Activated naive CD4-positive, alpha-beta T cell treated with anti-CD3 and anti-CD28 coated beads for 36 hours (primary cell): ENCODE measurements at regions of chr16 and their contacts with region 1.

Region 1: DNA sequence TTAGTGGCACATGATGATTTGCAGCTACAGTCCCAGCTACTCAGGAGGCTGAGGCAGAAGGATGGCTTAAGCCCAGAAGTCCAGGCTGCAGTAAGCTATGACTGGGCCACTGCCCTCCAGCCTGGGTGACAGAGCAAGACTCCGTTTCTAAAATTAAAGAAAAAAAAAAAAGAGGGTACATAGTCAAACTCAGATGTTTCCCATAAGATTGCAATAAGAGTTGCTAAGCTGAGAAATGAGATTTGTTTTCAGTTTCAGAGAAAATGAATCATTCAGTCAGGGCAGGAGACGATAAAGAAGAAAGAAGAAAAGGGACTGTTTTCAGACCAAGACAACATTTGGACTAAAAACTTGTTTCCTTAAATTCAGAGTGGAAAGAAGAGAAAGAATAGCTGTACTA is 30.2 kb upstream of the PHLPP2 start:
- DNase-seq: peak; percentile 10
- H3K4me3 Mint-ChIP-seq: no peak overlapping the region
- H3K27ac Mint-ChIP-seq: peak overlapping the region; percentile 81
- H3K4me1 Mint-ChIP-seq: peaks cover 23% of the 10 kb centered on the region
- H3K27me3 Mint-ChIP-seq: no peaks in the 10 kb centered on the region

Region 2: GRCh38 chr16:71775949-71776348 is 21.3 kb after region 1 on chr16:
- CTCF ChIA-PET with region 1: interaction called, 3 read pairs
- intact Hi-C with region 1: loop called (anchors 1 kb)
- DNase-seq: no peak
- H3K4me3 Mint-ChIP-seq: no peak overlapping the region
- H3K27ac Mint-ChIP-seq: peak overlapping the region; percentile 67
- H3K4me1 Mint-ChIP-seq: peaks cover 31% of the 10 kb centered on the region
- H3K27me3 Mint-ChIP-seq: no peaks in the 10 kb centered on the region

Region 3: GRCh38 chr16:71845639-71846430 is 91.2 kb after region 1 on chr16 and contains the start of gene ATXN1L:
- CTCF ChIA-PET with region 1: interaction called, 4 read pairs
- intact Hi-C with region 1: loop called (anchors 1 kb)
- DNase-seq: peak; percentile 90
- H3K4me3 Mint-ChIP-seq: peak within 1 kb of the TSS; percentile 88
- H3K27ac Mint-ChIP-seq: peak within 1 kb of the TSS; percentile 93
- H3K4me1 Mint-ChIP-seq: peaks cover 44% of the 10 kb centered on the region
- H3K27me3 Mint-ChIP-seq: no peaks in the 10 kb centered on the region
- total RNA-seq, gene ATXN1L: 11.3 to 11.9 TPM